ENCODE measurements at regions of chr14 and their contacts with region 1.

Region 1: DNA sequence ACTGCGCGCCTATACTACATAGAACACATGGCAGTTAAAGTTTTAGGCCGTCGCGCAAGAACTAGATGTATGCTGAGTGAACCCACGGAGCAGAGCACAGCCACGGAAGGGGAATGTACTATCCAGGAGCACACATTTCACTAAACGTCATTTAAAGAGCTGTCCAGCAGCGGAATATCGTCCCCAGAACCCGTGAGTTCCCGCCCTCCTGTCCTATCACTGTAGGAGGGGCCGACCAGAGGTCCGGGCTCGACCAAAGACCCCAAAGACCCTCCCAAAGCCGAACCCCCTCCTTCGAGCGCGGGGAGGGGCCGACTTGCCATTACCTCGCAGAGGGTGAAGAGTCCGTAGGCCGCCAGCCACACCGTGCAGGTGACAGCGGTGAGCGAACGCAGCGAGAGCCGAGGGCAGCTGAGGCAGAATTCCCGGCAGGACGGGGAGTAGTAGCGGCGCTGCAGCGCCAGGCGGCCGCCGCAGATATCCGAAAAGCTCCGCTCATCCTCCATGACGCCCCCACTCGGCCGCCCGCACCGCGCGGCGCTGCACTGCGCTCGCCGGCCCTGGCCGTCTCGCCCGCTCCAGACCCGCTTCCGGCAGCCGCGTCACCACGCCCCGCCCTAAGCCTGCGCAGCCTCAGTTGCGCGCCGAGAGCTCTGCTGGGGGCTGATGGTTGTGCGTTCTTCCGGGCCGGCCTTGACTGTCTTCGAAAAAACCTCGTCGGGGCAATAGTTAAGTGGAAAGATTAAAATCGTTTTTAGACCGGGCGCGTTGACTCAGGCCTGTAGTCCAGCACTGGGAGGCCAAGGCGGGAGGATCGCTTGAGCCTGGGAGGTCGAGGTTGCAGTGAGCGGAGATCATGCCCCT is at the start of gene PIGH:
- DNase-seq: peak; percentile 92 to 95 (median 94)
- H3K4me3 ChIP-seq: peak within 1 kb of the TSS; percentile 90
- H3K4me3 Mint-ChIP-seq: peak within 1 kb of the TSS; percentile 91 to 99 (median 96)
- H3K27ac ChIP-seq: peak within 1 kb of the TSS; percentile 72
- H3K27ac Mint-ChIP-seq: peak within 1 kb of the TSS; percentile 83 to 99 (median 96)
- H3K4me1 ChIP-seq: peaks cover 31% of the 10 kb centered on the region
- H3K4me1 Mint-ChIP-seq: peaks cover 40 to 57% (median 54%) of the 10 kb centered on the region in 3 donors
- H3K27me3 ChIP-seq: no peaks in the 10 kb centered on the region
- H3K27me3 Mint-ChIP-seq: peaks cover 0 to 2% of the 10 kb centered on the region in 2 donors
- total RNA-seq, gene PIGH: 24.2 to 26.1 TPM

Region 2: GRCh38 chr14:67547282-67547681 is 52.6 kb before region 1 on chr14:
- CTCF ChIA-PET with region 1: no interaction called
- POLR2A ChIA-PET with region 1: no interaction called
- DNase-seq: no peak
- H3K4me3 ChIP-seq: no peak overlapping the region
- H3K4me3 Mint-ChIP-seq: no peak overlapping the region
- H3K27ac ChIP-seq: no peak overlapping the region
- H3K27ac Mint-ChIP-seq: no peak overlapping the region
- H3K4me1 ChIP-seq: no peaks in the 10 kb centered on the region
- H3K4me1 Mint-ChIP-seq: no peaks in the 10 kb centered on the region
- H3K27me3 ChIP-seq: no peaks in the 10 kb centered on the region
- H3K27me3 Mint-ChIP-seq: peaks cover 28 to 43% of the 10 kb centered on the region in 2 donors

Region 3: DNA sequence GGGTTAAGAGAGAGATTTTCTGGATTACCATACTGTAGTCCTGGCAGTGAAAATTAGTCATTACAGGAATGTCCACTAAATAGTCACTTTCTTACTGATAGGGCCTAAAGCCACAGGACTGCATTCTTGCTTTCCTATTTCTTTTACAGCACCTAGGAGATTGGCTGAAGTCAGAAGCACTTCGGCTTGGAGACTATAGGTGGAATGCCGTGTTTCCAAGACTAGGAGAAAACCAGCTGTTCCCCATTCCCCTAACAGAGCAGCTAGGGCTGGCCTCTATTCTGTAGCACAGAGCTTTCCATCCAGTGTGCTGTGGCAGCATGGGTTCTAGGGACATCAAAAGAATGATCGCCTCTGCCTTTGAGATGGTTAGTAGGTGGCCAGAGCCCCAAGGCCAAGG is 15.0 kb before region 1 on chr14:
- CTCF ChIA-PET with region 1: no interaction called
- POLR2A ChIA-PET with region 1: no interaction called
- DNase-seq: no peak
- H3K4me3 ChIP-seq: no peak overlapping the region
- H3K4me3 Mint-ChIP-seq: no peak overlapping the region
- H3K27ac ChIP-seq: no peak overlapping the region
- H3K27ac Mint-ChIP-seq: no peak overlapping the region
- H3K4me1 ChIP-seq: no peaks in the 10 kb centered on the region
- H3K4me1 Mint-ChIP-seq: no peaks in the 10 kb centered on the region
- H3K27me3 ChIP-seq: no peaks in the 10 kb centered on the region
- H3K27me3 Mint-ChIP-seq: no peaks in the 10 kb centered on the region

Region 4: DNA sequence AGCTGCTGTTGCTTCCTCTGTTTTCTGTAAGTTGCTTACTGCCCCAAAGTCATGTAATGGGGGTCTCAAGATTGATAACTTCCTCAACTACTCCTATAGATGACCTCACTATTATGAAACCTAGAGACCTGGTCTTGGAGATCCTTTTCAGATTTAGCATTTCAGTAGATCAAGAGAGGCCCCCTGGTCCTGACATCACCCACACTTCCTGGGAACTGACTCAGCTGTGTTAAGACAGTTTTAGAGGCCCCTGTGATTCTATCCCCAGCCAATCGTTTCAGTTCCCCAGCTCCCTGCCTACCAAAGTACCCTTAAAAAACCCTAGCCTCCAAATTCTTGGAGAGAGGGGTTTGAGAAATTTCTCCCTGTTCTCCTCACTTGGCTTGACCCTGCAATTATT is 10.6 kb after region 1 on chr14:
- CTCF ChIA-PET with region 1: interaction called, 16 read pairs
- POLR2A ChIA-PET with region 1: interaction called, 4 read pairs
- DNase-seq: no peak
- H3K4me3 ChIP-seq: no peak overlapping the region
- H3K4me3 Mint-ChIP-seq: no peak overlapping the region
- H3K27ac ChIP-seq: no peak overlapping the region
- H3K27ac Mint-ChIP-seq: no peak overlapping the region
- H3K4me1 ChIP-seq: no peaks in the 10 kb centered on the region
- H3K4me1 Mint-ChIP-seq: no peaks in the 10 kb centered on the region
- H3K27me3 ChIP-seq: no peaks in the 10 kb centered on the region
- H3K27me3 Mint-ChIP-seq: peaks cover 7 to 32% of the 10 kb centered on the region in 2 donors

Region 5: DNA sequence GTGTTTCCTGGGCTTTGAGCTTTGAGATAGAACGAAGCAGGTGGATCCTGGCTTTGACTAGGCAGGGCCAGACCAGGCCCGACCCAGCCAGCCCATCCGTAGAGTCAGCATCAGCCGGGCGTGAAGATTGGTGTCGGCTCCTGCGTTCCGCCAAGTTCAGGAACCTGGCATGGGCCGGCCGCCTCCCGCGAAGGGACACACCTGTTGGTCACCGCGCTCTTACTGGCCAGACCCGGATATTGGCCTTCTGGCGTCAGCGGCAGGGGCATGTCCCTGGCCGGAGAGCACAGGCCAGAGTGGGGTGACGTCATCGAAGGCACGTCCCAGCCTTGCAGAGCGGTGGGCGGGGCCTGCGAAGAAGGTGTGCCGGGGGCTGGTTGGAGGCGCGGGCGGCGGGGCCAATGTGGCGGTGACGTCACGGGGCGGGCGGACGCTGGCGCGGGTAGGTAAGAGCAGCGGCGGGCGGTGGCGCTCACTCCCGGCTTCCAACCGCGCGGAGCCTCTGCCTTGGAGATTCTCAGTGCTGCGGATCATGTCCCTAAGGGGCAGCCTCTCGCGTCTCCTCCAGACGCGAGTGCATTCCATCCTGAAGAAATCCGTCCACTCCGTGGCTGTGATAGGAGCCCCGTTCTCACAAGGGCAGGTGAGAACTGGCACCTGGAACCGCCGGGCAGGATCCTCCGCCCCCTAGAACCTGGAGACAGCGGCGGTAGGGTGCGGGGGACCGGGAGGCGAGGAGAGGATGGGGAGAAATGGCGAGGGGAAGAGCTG is 19.7 kb after region 1 on chr14 and contains the start of gene ARG2:
- CTCF ChIA-PET with region 1: interaction called, 14 read pairs
- POLR2A ChIA-PET with region 1: no interaction called
- DNase-seq: peak; percentile 95 to 98 (median 98)
- H3K4me3 ChIP-seq: peak within 1 kb of the TSS; percentile 82
- H3K4me3 Mint-ChIP-seq: peak within 1 kb of the TSS; percentile 85 to 93 (median 88)
- H3K27ac ChIP-seq: peak within 1 kb of the TSS; percentile 90
- H3K27ac Mint-ChIP-seq: peak within 1 kb of the TSS; percentile 90 to 99 (median 97)
- H3K4me1 ChIP-seq: peaks cover 31% of the 10 kb centered on the region
- H3K4me1 Mint-ChIP-seq: peaks cover 20 to 26% (median 22%) of the 10 kb centered on the region in 3 donors
- H3K27me3 ChIP-seq: no peaks in the 10 kb centered on the region
- H3K27me3 Mint-ChIP-seq: peaks cover 5 to 10% of the 10 kb centered on the region in 2 donors
- total RNA-seq, gene ARG2: 2.3 to 2.8 TPM